ENCODE measurements at regions of chr4 and their contacts with region 1.

Region 1: DNA sequence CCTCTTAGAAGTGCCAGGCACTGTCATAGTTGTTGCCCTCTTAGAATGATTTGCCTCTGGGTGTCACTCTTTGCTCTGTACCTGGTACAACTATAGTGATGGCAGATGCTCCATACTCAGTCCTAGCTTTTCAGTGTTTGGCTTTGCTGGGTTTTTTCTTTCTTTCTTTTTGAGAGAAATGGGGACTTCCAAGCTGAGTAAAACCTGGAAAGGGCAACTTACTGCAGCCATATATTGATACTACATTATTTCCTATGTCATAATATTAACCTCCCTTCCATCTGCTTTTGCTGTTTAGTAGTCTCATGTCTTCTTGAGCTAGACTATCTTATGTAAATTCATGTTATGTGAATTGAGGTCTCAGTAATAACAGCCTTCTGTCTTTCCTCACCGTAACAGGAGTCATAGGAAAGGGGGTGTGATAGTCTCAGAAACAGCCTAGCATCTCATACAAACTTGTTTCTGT is 49.0 kb downstream of the NIPAL1 start:
- DNase-seq: peak; percentile 48
- H3K4me3 Mint-ChIP-seq: no peak overlapping the region
- H3K27ac Mint-ChIP-seq: peak overlapping the region; percentile 44
- H3K4me1 Mint-ChIP-seq: peaks cover 36% of the 10 kb centered on the region
- H3K27me3 Mint-ChIP-seq: no peaks in the 10 kb centered on the region

Region 2: DNA sequence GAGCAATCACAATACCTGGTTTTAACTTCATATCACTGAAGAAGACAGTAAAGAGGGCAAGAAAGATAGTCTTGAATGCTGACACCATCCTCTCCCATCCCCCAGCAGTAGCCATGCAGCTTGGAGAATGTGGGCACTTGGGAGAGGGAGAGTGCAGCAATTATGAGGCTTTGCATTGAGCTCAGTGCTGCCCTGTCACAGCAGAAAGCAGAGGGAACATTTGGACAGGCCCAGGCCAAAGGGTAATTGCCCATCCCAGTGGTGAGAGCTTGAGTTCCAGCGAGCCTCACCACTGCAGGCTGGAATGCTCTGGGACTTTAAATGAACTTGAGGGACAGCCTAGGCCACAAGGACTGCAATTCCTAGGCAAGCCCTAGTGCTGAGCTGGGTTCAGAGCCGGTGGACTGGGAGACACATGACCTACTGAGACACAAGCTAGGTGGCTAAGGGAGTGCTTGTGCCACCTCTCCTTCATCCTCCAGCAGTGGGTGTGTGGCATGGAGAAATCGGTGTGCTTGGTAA is 264.1 kb before region 1 on chr4:
- CTCF ChIA-PET with region 1: no interaction called
- intact Hi-C with region 1: no loop called
- DNase-seq: no peak
- H3K4me3 Mint-ChIP-seq: no peak overlapping the region
- H3K27ac Mint-ChIP-seq: no peak overlapping the region
- H3K4me1 Mint-ChIP-seq: no peaks in the 10 kb centered on the region
- H3K27me3 Mint-ChIP-seq: no peaks in the 10 kb centered on the region

Region 3: GRCh38 chr4:48002267-48002666 is 63.4 kb before region 1 on chr4:
- CTCF ChIA-PET with region 1: interaction called, 4 read pairs
- intact Hi-C with region 1: loop called (anchors 5 kb)
- DNase-seq: no peak
- H3K4me3 Mint-ChIP-seq: no peak overlapping the region
- H3K27ac Mint-ChIP-seq: no peak overlapping the region
- H3K4me1 Mint-ChIP-seq: no peaks in the 10 kb centered on the region
- H3K27me3 Mint-ChIP-seq: no peaks in the 10 kb centered on the region

Region 4: DNA sequence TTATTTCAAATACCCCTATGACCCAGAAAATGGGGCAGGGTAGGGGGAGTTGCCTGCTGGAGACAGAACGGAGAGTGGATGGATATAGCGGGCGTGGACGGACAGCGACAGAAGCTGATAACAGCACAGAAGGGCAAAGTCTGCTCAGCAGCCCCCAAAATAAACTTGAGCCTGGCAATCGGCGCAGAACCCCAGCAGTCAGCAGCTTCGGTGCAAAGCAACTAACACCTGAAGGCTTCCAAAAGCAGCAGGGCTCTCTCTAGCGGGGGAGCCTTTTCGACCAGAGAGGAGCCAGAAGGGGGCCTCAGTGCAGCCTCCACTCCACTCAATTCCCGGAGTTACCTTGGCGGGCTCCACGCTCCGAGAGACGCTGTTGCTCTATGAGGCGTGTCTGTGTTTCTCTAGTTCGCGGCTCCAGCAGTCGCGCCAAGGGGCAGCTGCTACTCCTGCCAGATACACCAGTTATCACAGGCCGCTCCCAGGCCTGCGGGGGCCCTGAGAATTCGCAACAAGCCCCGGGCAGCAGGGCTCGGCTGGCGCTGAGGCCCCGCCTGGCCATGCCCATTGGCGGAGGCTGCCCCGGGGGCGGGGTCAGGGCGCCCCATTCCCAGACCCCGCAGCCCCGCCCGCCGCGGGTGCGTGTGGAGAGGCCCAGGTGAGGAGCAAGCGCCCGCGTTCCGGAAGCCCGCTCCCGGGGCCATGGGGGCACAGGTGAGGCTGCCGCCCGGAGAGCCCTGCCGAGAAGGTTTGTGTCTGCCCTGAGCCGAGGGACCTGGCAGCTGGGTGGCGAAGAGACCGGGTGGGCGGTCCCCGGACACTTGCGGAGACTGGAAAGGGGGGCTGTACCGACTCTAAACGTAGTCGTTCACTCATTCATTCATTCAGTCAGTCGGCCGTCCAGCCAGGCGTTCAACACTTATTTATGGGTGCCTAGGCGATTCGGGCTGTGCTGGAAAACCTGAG is 49.2 kb before region 1 on chr4 and contains the starts of genes CNGA1 and NIPAL1:
- CTCF ChIA-PET with region 1: interaction called, 3 read pairs
- intact Hi-C with region 1: loop called (anchors 1 kb)
- DNase-seq: peak; percentile 72
- H3K4me3 Mint-ChIP-seq: peak within 1 kb of the TSS; percentile 81
- H3K27ac Mint-ChIP-seq: peak within 1 kb of the TSS; percentile 46
- H3K4me1 Mint-ChIP-seq: peaks cover 26% of the 10 kb centered on the region
- H3K27me3 Mint-ChIP-seq: peaks cover 5% of the 10 kb centered on the region
- total RNA-seq, gene CNGA1: 0.26 to 0.94 TPM
- total RNA-seq, gene NIPAL1: 1.0 to 2.0 TPM

Region 5: DNA sequence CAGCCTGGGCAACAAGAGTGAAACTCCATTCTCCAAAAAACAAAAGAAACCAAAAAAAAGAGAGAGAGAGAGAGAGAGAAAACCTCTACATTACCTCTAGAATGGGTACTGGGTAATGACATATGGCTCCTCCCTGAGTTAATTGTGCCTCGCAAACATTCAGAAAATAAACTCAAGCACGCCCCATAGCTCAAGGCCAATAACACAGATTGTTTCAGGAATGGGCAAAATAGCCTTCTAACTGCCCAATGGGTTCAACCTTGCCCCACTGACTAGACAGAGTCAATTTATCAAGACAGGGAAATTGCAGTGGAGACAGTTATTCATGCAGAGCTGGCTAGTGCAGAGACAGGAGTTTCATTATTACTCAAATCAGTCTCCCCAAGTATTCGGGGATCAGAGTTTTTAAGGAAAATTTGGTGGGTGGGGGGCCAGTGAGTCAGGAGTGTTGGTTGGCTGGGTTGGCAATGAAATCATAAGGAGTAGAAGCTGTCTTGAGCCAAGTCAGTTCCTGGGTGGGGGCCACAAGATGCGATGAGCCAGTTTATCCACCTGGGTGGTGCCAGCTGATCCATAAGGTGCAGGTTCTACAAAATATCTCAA is 24.0 kb before region 1 on chr4:
- CTCF ChIA-PET with region 1: interaction called, 74 read pairs
- intact Hi-C with region 1: loop called (anchors 1 kb)
- DNase-seq: no peak
- H3K4me3 Mint-ChIP-seq: no peak overlapping the region
- H3K27ac Mint-ChIP-seq: no peak overlapping the region
- H3K4me1 Mint-ChIP-seq: peaks cover 72% of the 10 kb centered on the region
- H3K27me3 Mint-ChIP-seq: no peaks in the 10 kb centered on the region

Region 6: GRCh38 chr4:48047421-48047844 is 18.2 kb before region 1 on chr4:
- CTCF ChIA-PET with region 1: interaction called, 17 read pairs
- intact Hi-C with region 1: loop called (anchors 1 kb)
- DNase-seq: peak; percentile 91
- H3K4me3 Mint-ChIP-seq: peak overlapping the region; percentile 1
- H3K27ac Mint-ChIP-seq: no peak overlapping the region
- H3K4me1 Mint-ChIP-seq: peaks cover 58% of the 10 kb centered on the region
- H3K27me3 Mint-ChIP-seq: no peaks in the 10 kb centered on the region

Region 7: DNA sequence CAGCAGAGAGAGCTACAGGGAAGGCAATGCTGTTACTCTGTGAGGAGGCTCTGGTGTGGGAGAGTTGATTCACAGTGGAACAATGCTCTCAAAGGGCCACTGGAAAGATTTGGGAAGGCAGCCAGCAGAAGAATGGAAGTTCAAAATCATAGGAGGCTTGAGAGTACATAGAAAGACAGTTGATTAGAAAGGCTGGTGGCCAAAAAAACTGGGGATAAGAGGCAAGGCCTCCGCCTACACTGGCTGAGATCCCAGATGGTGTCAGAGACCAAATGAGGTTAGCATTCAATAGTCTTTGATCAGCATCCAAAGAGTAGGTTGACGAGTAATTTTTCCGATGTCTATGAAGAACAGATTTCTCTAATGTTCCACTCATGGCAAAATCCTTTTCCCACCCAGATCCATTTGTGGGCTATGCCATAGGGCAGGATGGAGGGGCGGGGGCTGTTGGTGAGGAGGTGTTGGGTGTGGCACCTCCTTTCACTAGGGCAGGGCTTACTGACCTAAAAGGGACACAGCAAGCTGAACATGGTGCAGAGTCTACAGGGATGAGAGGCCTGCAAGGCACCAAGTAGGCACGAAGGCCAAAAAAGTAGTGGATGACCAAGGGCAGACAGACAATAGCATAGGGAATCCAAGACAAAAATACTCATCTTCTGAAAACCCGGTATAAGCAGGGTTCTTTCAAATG is 188.9 kb after region 1 on chr4:
- CTCF ChIA-PET with region 1: no interaction called
- intact Hi-C with region 1: no loop called
- DNase-seq: no peak
- H3K4me3 Mint-ChIP-seq: no peak overlapping the region
- H3K27ac Mint-ChIP-seq: no peak overlapping the region
- H3K4me1 Mint-ChIP-seq: peaks cover 2% of the 10 kb centered on the region
- H3K27me3 Mint-ChIP-seq: no peaks in the 10 kb centered on the region

Measured in activated naive CD4-positive, alpha-beta T cell treated with anti-CD3 and anti-CD28 coated beads for 36 hours (primary cell).